Ovary (tissue), 10 donors: ENCODE measurements at regions of chr4 and their contacts with region 1.

Region 1: DNA sequence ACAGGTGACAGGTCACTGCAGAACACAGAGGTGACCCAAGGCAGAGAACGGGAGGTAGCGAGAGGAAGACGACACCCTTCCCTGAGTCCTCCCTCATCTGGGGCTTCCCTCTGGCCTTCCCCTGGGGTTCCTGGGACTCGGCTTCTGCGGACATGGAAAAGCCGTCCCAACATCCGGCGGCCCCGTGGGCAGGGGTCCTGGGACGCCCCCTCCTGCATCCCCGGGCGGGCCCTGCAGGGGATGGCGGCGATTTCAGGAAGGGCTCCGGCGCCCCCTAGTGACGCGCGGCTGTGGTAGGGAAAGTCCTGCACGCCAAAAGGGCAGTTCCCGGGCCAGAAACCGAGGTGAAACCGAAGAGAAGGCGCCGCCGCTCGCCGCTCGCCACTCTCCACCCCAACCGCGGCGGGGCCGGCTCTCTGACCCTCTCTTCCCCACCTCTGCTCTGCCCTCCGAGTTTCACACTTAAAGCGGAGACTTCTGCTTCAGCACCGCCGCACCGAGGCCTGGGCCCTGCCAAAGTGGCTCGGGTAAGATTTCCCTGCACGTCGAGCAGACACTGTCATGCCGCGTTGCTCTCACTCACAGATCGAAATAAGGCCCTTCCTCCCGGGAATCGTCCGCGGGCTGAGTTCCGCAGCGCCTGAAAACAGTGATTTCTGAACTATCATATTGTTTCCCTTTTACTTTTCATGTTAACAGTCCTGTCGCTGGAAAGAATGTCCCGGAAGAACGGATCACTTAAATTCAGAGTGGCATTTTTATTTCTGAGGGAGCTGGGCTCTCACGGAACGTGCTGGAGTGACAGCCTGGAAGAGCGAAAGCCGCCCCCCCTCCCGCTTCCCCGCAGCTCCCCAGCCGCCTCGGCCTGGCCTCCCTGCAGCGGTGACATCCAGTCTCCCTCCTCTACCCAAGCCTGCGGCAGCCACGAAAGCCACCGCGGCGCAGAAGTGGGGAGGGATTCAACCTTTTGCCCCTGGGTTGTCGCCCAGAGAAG is 110.6 kb downstream of the DCTD start:
- DNase-seq: peak; percentile 65 to 85 (median 70)
- H3K4me3 ChIP-seq: peak overlapping the region; percentile 38
- H3K27ac ChIP-seq: no peak overlapping the region
- H3K4me1 ChIP-seq: no peaks in the 10 kb centered on the region
- H3K27me3 ChIP-seq: no peaks in the 10 kb centered on the region
- CTCF ChIP-seq: peak; percentile 11 to 68 (median 67)
- EP300 ChIP-seq: no peak
- POLR2A ChIP-seq: no peak

Region 2: GRCh38 chr4:181143250-181143854 is 1663.2 kb before region 1 on chr4:
- intact Hi-C with region 1: loop called in 1 of 4 experiments (anchors 10 kb)
- DNase-seq: peak; percentile 42 to 81 (median 71)
- H3K4me3 ChIP-seq: no peak overlapping the region
- H3K27ac ChIP-seq: no peak overlapping the region
- H3K4me1 ChIP-seq: no peaks in the 10 kb centered on the region
- H3K27me3 ChIP-seq: no peaks in the 10 kb centered on the region
- CTCF ChIP-seq: peak; percentile 31 to 53 (median 44)
- EP300 ChIP-seq: no peak
- POLR2A ChIP-seq: no peak

Region 3: GRCh38 chr4:182492422-182492821 is 314.1 kb before region 1 on chr4:
- intact Hi-C with region 1: loop called in 1 of 4 experiments (anchors 10 kb)
- DNase-seq: no peak
- H3K4me3 ChIP-seq: no peak overlapping the region
- H3K27ac ChIP-seq: no peak overlapping the region
- H3K4me1 ChIP-seq: no peaks in the 10 kb centered on the region
- H3K27me3 ChIP-seq: no peaks in the 10 kb centered on the region
- CTCF ChIP-seq: no peak
- EP300 ChIP-seq: no peak
- POLR2A ChIP-seq: no peak